PC-9 (cell line): ENCODE measurements at regions of chr6 and their contacts with region 1.

Region 1: DNA sequence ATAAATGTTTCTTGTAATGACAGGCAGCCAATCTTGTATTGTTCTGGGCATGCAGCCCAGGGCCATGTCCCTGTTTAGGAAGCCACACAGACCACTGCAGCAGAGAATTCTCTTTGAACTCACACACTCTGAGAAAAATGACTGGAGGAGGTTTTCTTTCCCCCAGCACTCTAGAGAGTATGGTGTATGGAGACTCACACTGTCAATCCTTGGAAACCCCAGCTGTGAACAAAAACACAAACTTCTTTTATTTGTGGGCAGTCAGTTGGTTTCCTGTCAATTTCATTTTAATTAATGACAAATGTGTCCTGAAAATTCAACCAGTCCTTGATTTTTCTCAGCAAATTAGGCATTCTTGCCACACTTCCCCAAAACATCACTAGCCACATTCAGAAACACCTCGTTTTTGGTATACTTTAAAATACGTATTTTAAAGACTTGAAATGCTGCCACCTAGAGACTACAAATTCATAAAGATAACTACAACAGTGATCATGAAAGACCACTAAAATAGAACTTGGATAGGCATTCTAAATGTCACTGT is 52.9 kb upstream of the UFL1 start:
- DNase-seq: no peak
- H3K4me3 ChIP-seq: no peak overlapping the region
- H3K27ac ChIP-seq: no peak overlapping the region
- H3K4me1 ChIP-seq: no peaks in the 10 kb centered on the region
- H3K27me3 ChIP-seq: no peaks in the 10 kb centered on the region
- CTCF ChIP-seq: peak; percentile 60; the same call in 1 of the 2 replicates

Region 2: DNA sequence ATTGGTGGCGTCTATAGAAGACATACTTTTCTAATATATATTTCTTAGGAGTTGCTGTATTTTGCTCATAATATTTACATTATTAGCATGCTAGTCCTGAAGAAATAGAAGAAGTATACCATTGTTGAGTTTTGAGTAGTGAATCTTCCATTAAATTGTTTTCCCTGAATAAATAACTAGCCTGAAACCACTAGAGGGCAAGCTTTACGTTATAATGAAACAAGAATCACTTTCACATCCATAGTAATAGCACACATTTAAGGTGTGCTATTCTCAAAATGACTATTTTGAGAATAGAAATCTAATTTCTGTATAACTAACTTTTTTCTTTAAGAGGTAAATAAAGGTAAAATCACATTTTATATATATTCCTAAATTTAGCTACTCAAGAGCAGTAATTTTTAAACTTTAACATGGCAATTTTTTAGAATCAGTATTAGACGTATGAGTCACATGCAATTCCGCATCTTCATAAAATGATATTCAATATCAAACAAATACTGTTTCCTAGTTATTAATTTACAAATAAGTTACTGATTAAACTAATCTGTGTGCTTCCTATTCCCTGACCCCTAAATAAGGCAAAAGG is 1104.6 kb before region 1 on chr6:
- CTCF ChIA-PET with region 1: no interaction called
- POLR2A ChIA-PET with region 1: no interaction called
- intact Hi-C with region 1: loop called (anchors 10 kb)
- DNase-seq: no peak
- H3K4me3 ChIP-seq: no peak overlapping the region
- H3K27ac ChIP-seq: no peak overlapping the region
- H3K4me1 ChIP-seq: no peaks in the 10 kb centered on the region
- H3K27me3 ChIP-seq: no peaks in the 10 kb centered on the region
- CTCF ChIP-seq: peak; percentile 76

Region 3: DNA sequence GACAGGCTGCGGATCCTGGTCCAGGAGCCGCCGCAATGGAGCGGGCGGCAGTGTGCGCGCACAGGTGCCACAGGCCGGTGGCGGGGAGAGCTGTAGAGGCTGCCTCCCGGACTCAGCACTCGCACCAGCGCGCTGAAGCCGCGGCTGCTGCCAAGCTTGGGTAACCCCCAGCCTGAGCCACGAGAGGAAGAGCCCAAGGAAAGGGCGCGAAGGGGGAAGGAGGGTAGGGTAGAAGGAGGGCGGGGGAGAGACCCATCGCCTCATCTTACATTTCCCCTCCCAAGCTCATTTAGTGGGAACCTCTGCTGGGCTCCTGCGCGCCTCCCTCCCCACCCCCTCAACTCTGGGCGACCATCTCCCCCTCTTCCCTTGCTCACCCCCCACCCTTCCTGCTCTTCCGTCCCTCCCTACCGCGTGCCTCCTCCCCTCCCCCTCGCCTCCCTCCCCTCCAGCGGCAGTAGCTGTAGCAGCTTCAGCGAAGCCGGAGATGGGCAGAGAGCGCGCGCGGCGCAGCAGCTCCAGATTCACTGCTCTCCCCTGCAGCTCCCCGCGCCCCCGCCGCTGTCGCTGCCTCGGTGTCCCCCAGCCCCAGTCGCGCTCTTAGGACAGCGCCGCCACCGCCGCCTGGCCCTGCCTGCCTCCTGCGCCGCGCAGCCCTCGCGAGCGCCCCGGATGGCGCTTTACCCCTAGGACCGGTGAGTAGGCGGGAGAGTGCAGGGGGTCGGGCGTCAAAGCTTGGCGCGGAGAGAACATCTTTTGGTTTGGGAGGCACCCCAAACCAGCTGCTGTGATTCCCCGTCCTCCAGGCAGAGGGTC is 453.0 kb before region 1 on chr6 and contains the start of gene FUT9:
- CTCF ChIA-PET with region 1: no interaction called
- POLR2A ChIA-PET with region 1: interaction called, 5 read pairs
- intact Hi-C with region 1: loop called (anchors 5 kb)
- DNase-seq: peak; percentile 72 to 81
- H3K4me3 ChIP-seq: peak within 1 kb of the TSS; percentile 80
- H3K27ac ChIP-seq: peak within 1 kb of the TSS; percentile 31
- H3K4me1 ChIP-seq: peaks cover 32% of the 10 kb centered on the region
- H3K27me3 ChIP-seq: no peaks in the 10 kb centered on the region
- CTCF ChIP-seq: peak; percentile 48; the same call in 1 of the 2 replicates
- total RNA-seq, gene FUT9: 5.2 and 6.9 TPM in 2 replicates